ENCODE measurements at regions of chr3 and their contacts with region 1.

Region 1: GRCh38 chr3:120417272-120417911 is 33.4 kb downstream of the FSTL1 start:
- DNase-seq: peak; percentile 78
- H3K4me3 Mint-ChIP-seq: peak overlapping the region; percentile 84
- H3K27ac Mint-ChIP-seq: no peak overlapping the region
- H3K4me1 Mint-ChIP-seq: peaks cover 22% of the 10 kb centered on the region
- H3K27me3 Mint-ChIP-seq: peaks cover 2% of the 10 kb centered on the region

Region 2: DNA sequence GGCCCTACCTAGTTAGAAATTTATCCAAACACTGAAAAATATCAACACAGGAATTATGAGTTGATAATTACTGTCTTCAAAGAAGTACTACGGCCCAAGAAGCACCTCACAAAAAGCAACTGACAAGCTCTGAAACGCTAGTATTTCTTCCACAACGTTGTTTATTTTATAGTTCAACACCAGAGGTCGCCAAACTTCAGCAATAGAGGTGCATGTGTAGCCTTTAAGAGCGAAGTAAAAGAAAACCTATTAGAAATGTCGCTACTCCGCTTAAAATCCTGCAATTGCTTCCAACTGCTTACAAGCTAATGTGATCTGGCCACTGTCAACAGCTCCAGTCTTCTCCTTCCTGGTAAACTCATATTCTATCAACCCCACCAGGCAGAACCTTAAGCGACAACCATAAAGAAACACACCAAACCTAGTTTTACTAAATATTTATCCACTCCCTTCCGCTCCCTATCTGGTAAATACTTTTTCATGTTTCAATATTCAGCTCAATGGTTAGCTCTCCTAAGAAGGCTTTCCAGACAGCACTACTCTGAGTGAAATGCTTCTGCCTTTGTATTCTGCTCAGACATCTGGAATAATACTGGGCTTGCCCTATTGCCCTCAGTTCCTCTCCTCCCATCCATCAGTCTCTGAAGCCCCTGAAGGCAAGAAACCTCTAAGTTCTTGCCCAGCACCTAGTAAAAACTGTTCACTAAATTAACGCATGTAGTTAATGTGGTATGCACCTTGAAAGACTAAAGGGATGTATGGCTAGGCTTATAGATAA is 525.3 kb before region 1 on chr3:
- intact Hi-C with region 1: loop called (anchors 1 kb)
- DNase-seq: peak; percentile 35
- H3K4me3 Mint-ChIP-seq: no peak overlapping the region
- H3K27ac Mint-ChIP-seq: no peak overlapping the region
- H3K4me1 Mint-ChIP-seq: peaks cover 10% of the 10 kb centered on the region
- H3K27me3 Mint-ChIP-seq: no peaks in the 10 kb centered on the region

Region 3: GRCh38 chr3:120245386-120245785 is 172.0 kb before region 1 on chr3:
- intact Hi-C with region 1: loop called (anchors 1 kb)
- DNase-seq: no peak
- H3K4me3 Mint-ChIP-seq: no peak overlapping the region
- H3K27ac Mint-ChIP-seq: no peak overlapping the region
- H3K4me1 Mint-ChIP-seq: no peaks in the 10 kb centered on the region
- H3K27me3 Mint-ChIP-seq: peaks cover 26% of the 10 kb centered on the region

Region 4: DNA sequence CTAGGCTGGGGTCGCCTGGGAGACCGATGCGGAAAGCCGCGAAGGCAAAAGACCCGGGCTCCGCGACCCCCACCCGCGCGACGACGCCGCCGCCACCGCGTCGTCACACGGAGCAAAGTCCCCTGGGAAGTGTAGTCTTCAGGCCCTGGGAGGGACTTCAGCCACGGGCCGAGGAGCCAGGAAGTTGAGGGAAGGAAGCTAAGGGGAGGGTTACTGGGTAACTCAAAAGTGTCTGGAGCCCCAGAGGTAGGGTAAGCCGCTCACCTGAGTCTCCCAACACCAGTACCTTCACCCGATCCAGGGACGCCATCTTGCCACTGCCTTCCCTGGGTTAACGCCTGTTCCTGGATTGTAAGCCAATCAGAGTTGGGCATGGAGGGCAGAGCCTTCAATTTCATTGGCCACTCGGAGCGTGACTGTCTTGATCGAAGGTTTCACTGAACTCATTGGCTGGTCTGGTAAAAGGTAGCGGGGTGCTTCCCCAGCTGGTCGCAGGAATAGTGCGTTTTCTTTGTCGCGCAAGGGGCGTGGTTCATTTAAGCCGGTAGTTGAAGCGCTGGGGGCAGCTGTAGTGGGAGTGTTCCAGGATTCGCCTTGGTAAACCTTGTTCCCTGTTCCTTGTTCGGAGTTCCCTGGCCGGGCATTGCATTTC is 324.9 kb after region 1 on chr3 and contains the starts of genes GTF2E1 and RABL3:
- intact Hi-C with region 1: loop called (anchors 5 kb)
- DNase-seq: peak; percentile 95
- H3K4me3 Mint-ChIP-seq: peak within 1 kb of the TSS; percentile 84
- H3K27ac Mint-ChIP-seq: peak within 1 kb of the TSS; percentile 89
- H3K4me1 Mint-ChIP-seq: peaks cover 22% of the 10 kb centered on the region
- H3K27me3 Mint-ChIP-seq: no peaks in the 10 kb centered on the region
- total RNA-seq, gene GTF2E1: 25.3 and 29.2 TPM in 2 replicates
- total RNA-seq, gene RABL3: 24.3 and 25.6 TPM in 2 replicates